ENCODE measurements at regions of chr16 and their contacts with region 1.

Region 1: DNA sequence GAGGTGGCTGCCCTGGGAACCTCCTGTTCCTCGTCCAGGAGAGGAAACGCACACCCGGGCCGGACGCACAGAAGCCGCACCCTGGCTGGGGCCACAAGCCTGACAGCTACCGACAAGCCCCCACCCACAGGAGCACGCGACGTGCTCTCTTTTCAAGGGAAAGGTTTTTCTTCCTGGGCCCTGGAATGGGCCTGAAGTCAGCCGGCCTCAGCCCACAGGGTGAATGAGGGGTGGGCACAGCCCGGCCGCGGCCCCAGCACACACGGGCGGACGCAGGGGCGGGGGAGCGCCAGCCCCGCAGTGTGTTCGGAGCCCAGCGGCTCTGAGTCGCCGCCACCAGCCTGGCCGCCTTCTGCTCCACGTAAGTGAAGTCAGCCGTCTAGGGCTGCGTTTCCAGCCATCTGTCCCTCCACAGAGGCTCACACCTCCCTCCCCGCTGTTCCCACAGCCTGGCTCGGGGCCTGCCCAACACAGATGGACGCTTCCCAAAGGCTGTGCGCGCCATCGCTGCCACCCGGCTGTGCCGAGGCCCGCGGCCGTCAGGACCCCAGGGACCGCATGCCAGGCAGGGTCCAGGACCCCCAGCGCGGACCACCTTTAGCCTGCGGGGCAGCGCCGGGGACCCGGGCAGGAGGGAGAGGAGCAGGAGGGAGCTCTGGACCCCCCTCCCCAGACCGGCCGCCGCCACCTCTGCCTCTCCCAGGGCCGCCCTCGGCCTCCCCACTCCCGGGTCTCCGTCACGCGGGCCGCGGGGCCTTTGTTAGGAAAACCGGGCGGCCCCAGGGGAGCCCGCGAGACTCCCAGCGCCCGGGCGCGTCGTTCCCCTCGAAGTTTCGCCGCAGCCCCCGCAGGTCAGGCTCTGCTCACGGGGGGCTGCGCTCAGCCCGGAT is 36.8 kb downstream of the CBFA2T3 start:
- DNase-seq: no peak
- ATAC-seq: peak; percentile 56
- H3K4me3 ChIP-seq: peak overlapping the region; percentile 49 to 53
- H3K27ac ChIP-seq: peak overlapping the region; percentile 51
- H3K4me1 ChIP-seq: no peaks in the 10 kb centered on the region
- H3K27me3 ChIP-seq: no peaks in the 10 kb centered on the region
- CTCF ChIP-seq: no peak

Region 2: GRCh38 chr16:88672776-88673175 is 267.4 kb before region 1 on chr16:
- CTCF ChIA-PET with region 1: no interaction called
- POLR2A ChIA-PET with region 1: no interaction called
- in situ Hi-C with region 1: no loop called
- intact Hi-C with region 1: no loop called
- DNase-seq: no peak
- ATAC-seq: peak; percentile 59; the same call in 1 of the 2 replicates
- H3K4me3 ChIP-seq: no peak overlapping the region
- H3K27ac ChIP-seq: no peak overlapping the region
- H3K4me1 ChIP-seq: no peaks in the 10 kb centered on the region
- H3K27me3 ChIP-seq: no peaks in the 10 kb centered on the region
- CTCF ChIP-seq: no peak; the same call in none of the 2 replicates

Region 3: DNA sequence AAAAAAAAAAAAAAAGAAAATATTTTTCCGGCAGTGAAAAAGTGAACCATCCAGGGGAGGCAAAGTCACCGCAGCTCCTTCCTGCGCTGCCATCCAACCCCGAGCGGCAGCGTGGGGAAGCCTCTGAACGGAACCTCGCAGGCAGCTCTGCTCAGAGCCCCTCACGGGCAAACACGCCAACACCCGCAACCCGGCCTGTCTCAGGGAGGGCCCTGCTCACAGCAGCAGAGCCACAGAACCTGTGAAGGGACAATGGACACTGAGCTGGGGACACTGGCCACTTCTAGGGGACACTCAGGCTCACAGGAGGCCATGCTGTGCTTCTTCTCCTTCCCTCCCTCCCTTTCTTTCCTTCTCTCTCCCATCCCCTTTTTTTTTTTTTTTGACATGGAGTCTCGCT is 107.1 kb before region 1 on chr16:
- CTCF ChIA-PET with region 1: no interaction called
- POLR2A ChIA-PET with region 1: interaction called, 10 read pairs
- in situ Hi-C with region 1: no loop called
- intact Hi-C with region 1: no loop called
- DNase-seq: no peak
- ATAC-seq: no peak
- H3K4me3 ChIP-seq: no peak overlapping the region
- H3K27ac ChIP-seq: no peak overlapping the region
- H3K4me1 ChIP-seq: no peaks in the 10 kb centered on the region
- H3K27me3 ChIP-seq: no peaks in the 10 kb centered on the region
- CTCF ChIP-seq: no peak

Region 4: GRCh38 chr16:88959022-88959421 is 18.8 kb after region 1 on chr16:
- CTCF ChIA-PET with region 1: no interaction called
- POLR2A ChIA-PET with region 1: no interaction called
- in situ Hi-C with region 1: no loop called
- intact Hi-C with region 1: no loop called
- DNase-seq: no peak
- ATAC-seq: no peak
- H3K4me3 ChIP-seq: no peak overlapping the region
- H3K27ac ChIP-seq: no peak overlapping the region
- H3K4me1 ChIP-seq: no peaks in the 10 kb centered on the region
- H3K27me3 ChIP-seq: no peaks in the 10 kb centered on the region
- CTCF ChIP-seq: no peak

Region 5: GRCh38 chr16:89167425-89167941 is 227.3 kb after region 1 on chr16:
- CTCF ChIA-PET with region 1: interaction called, 3 read pairs
- POLR2A ChIA-PET with region 1: interaction called, 10 read pairs
- in situ Hi-C with region 1: no loop called
- intact Hi-C with region 1: no loop called
- DNase-seq: no peak
- ATAC-seq: peak; percentile 59
- H3K4me3 ChIP-seq: no peak overlapping the region
- H3K27ac ChIP-seq: no peak overlapping the region
- H3K4me1 ChIP-seq: peaks cover 6% of the 10 kb centered on the region; the same call in 1 of the 2 replicates
- H3K27me3 ChIP-seq: no peaks in the 10 kb centered on the region
- CTCF ChIP-seq: peak; percentile 81

Measured in Panc1 (cell line).